Uterus (tissue), 4 donors: ENCODE measurements at regions of chr19 and their contacts with region 1.

Region 1: DNA sequence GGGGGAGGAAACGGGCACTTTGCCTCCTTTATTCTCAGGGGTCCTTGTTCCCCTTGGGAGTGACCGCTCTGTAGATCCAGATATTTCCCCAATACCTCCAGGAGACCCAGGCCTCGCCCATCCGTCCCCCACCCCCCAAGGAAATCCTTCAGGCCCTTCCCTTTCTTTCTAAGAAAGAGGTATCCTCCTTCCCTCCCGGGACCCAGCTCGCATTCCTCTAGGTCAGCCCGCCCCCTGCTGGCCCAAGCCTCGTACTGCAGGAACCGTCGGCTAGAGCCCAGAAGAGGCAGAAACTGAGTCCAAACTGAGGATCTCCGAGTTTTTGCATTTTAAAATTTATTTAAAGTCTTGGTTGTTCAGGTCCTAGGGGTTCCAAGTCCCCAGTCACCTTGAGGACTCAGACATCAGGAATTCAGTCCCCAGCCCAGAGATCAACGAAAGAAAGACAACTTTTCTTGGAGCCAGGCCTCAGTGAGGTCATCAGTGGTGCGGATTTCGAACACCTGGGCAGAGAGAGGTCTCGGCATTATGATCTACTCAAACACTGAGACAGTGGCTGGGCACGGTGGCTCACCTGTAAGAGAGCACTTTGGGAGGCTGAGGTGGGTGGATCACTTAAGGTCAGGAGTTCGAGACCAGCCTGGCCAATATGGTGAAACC is 7.5 kb upstream of the LRFN1 start:
- DNase-seq: peak; percentile 86 to 87
- H3K4me3 ChIP-seq: no peak overlapping the region
- H3K27ac ChIP-seq: no peak overlapping the region
- H3K4me1 ChIP-seq: no peaks in the 10 kb centered on the region
- H3K27me3 ChIP-seq: no peaks in the 10 kb centered on the region
- CTCF ChIP-seq: peak; percentile 93 to 97 (median 94)
- POLR2A ChIP-seq: no peak

Region 2: GRCh38 chr19:39070888-39071287 is 257.3 kb before region 1 on chr19:
- intact Hi-C with region 1: no loop called
- DNase-seq: no peak
- H3K4me3 ChIP-seq: no peak overlapping the region
- H3K27ac ChIP-seq: no peak overlapping the region
- H3K4me1 ChIP-seq: no peaks in the 10 kb centered on the region
- H3K27me3 ChIP-seq: no peaks in the 10 kb centered on the region
- CTCF ChIP-seq: no peak
- POLR2A ChIP-seq: no peak

Region 3: DNA sequence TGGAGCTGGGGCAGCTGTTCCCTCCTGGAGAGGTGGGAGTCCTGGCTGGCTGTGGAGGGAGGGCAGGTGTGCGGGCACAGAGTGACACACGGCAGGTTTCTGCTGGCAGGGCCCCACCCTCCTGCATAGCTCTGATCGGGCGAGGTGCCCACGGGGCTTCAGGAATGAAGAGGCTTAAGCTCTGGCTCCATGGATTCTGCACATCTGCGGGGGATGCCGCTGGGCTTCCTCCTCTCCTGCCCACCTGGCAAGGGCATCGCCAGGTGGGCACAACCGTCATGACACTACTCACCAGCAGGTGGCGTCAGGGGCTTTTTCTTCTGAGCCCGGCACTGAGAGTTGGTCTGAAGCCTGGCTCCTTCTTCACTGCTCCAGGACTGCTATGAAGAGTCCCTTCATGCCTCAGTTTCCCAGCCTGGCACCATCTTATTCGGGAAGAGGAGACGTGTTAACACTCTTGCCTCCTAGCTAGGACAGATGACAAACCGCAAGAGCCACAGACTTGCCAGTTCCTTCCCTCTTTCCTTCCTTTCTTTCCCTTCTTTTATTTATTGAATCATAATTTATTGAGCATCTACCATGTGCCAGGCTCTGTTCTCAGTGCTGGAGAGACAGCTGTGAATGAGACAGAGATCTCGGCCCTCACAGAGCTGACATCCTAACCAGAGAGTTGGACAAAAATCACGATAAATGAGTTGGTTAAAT is 217.8 kb before region 1 on chr19:
- intact Hi-C with region 1: loop called (anchors 5 kb)
- DNase-seq: peak in 1 of 2 donors; percentile 49
- H3K4me3 ChIP-seq: no peak overlapping the region
- H3K27ac ChIP-seq: no peak overlapping the region
- H3K4me1 ChIP-seq: no peaks in the 10 kb centered on the region
- H3K27me3 ChIP-seq: peaks cover 0 to 4% of the 10 kb centered on the region in 2 donors
- CTCF ChIP-seq: peak; percentile 40 to 69 (median 66)
- POLR2A ChIP-seq: no peak

Region 4: DNA sequence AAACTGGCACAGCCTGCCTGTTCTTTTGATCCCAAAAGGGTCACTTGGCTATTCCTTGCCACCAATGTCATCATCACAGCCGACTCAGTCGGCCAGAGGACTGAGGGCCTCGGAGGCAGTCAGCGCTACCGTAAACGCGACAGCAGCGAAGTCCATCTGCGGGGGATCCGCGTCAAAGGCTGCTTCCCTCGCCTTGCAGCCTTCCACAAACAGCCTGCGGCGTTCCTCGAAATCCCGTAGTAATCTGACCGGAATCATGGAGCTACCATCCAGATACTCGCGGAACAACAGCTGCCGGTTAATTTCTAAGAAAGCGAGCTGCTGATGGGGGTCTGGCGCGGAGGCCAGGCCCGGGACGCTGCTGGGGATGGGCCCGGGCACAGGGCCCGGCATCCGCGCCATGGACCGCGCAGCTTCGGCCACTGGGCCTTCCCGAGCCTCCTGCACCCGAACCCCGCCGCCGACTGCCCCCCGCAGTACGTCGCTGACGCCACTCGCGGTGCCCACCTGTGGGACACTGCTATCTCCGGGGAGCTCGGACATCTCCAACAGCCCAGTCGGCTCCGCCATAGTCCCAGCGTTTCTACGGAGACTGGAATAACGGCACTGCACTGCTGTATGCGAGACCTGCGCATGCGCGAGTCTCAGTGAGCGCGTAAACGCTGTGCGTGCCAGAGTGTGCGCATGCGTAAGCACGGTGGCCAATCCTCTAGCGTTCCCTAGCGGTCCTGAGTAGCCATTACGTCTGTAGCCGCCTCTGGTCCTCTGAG is 204.2 kb after region 1 on chr19 and contains the start of gene EID2B:
- intact Hi-C with region 1: no loop called
- DNase-seq: peak; percentile 95
- H3K4me3 ChIP-seq: peak within 1 kb of the TSS; percentile 55 to 81
- H3K27ac ChIP-seq: peak within 1 kb of the TSS; percentile 82 to 88
- H3K4me1 ChIP-seq: no peaks in the 10 kb centered on the region
- H3K27me3 ChIP-seq: no peaks in the 10 kb centered on the region
- CTCF ChIP-seq: peak; percentile 99 to 100 (median 100)
- POLR2A ChIP-seq: peak; percentile 80
- total RNA-seq, gene EID2B: 0.29 to 6.6 (median 5.1) TPM